T-cell (primary cell): ENCODE measurements at regions of chr1 and their contacts with region 1.

Region 1: GRCh38 chr1:242030071-242030470 is 31.2 kb upstream of the MAP1LC3C start:
- DNase-seq: no peak
- ATAC-seq: no peak
- H3K4me3 ChIP-seq: no peak overlapping the region
- H3K4me3 Mint-ChIP-seq: no peak overlapping the region
- H3K27ac ChIP-seq: no peak overlapping the region
- H3K27ac Mint-ChIP-seq: no peak overlapping the region
- H3K4me1 ChIP-seq: no peaks in the 10 kb centered on the region
- H3K4me1 Mint-ChIP-seq: no peaks in the 10 kb centered on the region
- H3K27me3 ChIP-seq: peaks cover 0 to 8% of the 10 kb centered on the region in 2 experiments
- H3K27me3 Mint-ChIP-seq: peaks cover 11 to 15% of the 10 kb centered on the region in 2 donors

Region 2: DNA sequence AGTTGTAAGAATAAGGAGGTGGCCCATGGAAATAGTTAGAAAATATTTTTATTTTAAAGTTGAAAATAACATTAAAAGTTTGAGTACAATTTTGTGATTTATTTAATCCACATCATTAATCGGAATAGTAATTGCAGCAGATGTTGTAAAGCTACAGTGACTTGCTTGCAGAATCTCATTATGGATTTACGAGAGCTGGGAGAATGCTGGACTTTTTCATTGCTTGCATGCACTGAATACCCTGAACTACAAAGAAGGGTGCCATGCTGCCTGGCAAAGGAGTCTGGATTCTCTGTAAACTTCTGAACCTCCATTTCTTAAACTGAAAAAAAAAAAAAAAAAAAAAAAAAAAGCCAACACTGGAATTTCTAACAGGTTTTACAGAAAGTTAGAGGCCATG is 351.5 kb before region 1 on chr1:
- CTCF ChIA-PET with region 1: no interaction called
- POLR2A ChIA-PET with region 1: interaction called in 1 of 2 experiments, 13 read pairs
- DNase-seq: no peak
- ATAC-seq: no peak
- H3K4me3 ChIP-seq: no peak overlapping the region
- H3K4me3 Mint-ChIP-seq: no peak overlapping the region
- H3K27ac ChIP-seq: no peak overlapping the region
- H3K27ac Mint-ChIP-seq: no peak overlapping the region
- H3K4me1 ChIP-seq: peaks cover 9 to 26% of the 10 kb centered on the region in 2 experiments
- H3K4me1 Mint-ChIP-seq: peaks cover 22 to 28% (median 25%) of the 10 kb centered on the region in 3 donors
- H3K27me3 ChIP-seq: no peaks in the 10 kb centered on the region
- H3K27me3 Mint-ChIP-seq: peaks cover 0 to 3% of the 10 kb centered on the region in 2 donors

Region 3: DNA sequence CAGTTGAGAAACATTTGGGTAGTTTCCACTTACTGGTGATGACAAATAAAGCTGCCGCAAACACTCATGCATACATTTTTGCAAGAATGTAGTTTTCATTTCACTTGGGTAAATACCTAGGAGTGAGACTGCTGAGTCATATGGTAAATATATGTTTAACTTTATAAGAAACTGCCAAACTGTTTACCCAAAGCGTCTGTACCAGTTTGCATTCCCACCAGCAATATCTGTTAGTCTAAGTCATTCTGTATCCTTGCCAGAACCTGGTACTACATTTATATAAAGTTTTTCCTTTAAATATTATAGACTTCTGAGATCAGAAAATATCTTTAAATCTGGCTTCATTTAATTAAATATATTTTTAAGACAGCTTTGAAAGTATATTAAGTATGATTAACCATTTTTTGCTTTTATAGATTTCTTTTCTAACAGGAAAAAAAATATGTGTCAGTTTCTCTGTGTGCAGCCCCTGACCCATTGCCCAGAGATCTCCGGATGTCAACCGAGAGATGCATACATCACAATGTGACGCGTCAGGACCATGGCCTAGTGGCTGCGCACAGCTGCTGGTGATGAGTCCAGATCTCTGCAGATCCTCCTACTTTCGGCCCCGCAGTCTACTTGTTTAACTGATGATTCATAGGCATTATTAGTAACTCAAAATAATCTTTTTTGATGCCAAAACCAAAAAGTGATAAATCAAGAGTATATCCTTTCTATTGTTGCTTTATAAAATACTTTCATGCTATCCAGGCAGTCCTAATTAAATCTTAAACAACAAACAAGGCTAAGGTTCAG is 195.9 kb after region 1 on chr1:
- CTCF ChIA-PET with region 1: no interaction called
- POLR2A ChIA-PET with region 1: no interaction called
- DNase-seq: no peak
- ATAC-seq: no peak
- H3K4me3 ChIP-seq: no peak overlapping the region
- H3K4me3 Mint-ChIP-seq: no peak overlapping the region
- H3K27ac ChIP-seq: no peak overlapping the region
- H3K27ac Mint-ChIP-seq: no peak overlapping the region
- H3K4me1 ChIP-seq: no peaks in the 10 kb centered on the region
- H3K4me1 Mint-ChIP-seq: no peaks in the 10 kb centered on the region
- H3K27me3 ChIP-seq: peaks cover 0 to 5% of the 10 kb centered on the region in 2 experiments
- H3K27me3 Mint-ChIP-seq: no peaks in the 10 kb centered on the region